ENCODE measurements at regions of chr2 and their contacts with region 1.

Region 1: DNA sequence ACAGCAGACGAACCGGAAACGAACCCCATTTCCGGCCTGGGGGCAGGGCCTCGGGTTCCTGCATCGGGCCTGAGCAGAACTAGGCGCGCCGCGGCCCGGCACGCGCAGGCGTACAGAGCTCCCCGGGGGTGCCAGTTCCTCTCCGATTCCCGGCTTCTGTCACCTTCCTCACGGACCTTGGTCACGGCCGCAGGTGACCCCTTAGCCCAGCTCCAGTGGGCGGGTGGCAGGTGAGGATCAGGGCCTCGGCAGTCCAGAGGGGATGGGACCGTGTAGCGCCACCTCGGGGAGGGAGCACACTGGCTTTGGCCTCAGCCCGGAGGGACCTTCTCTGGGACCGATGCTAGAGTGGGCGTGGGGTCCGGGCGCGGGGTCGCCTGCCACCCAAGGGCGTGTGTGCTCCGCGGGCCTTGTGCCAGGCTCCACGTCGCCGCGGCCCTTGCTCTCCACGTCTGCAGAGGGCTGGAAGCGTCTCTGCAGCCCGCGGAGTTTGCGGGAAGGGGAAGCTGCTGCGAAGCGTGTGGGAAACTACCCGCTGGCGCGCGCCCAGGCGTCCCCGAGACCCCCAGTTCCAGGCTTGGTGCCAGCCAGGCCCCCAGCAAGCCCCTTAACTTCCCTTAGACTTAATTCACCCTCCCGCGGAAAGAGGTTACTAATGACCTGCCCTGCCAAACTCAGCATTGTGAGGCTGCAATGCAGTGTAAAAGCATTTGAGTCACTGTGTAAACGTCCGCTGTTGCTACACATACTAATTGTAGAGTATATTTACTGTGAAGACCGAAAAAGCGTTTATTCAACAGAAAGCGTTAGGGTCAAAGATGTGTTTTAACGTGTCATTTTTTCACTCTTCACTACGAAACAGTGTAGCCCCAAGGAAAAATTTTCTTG is at the start of gene TRAPPC12:
- DNase-seq: peak; percentile 93
- H3K4me3 Mint-ChIP-seq: peak within 1 kb of the TSS; percentile 97
- H3K27ac Mint-ChIP-seq: peak within 1 kb of the TSS; percentile 94
- H3K4me1 Mint-ChIP-seq: peaks cover 49% of the 10 kb centered on the region
- H3K27me3 Mint-ChIP-seq: no peaks in the 10 kb centered on the region
- total RNA-seq, gene TRAPPC12: 44.3 to 45.8 TPM

Region 2: DNA sequence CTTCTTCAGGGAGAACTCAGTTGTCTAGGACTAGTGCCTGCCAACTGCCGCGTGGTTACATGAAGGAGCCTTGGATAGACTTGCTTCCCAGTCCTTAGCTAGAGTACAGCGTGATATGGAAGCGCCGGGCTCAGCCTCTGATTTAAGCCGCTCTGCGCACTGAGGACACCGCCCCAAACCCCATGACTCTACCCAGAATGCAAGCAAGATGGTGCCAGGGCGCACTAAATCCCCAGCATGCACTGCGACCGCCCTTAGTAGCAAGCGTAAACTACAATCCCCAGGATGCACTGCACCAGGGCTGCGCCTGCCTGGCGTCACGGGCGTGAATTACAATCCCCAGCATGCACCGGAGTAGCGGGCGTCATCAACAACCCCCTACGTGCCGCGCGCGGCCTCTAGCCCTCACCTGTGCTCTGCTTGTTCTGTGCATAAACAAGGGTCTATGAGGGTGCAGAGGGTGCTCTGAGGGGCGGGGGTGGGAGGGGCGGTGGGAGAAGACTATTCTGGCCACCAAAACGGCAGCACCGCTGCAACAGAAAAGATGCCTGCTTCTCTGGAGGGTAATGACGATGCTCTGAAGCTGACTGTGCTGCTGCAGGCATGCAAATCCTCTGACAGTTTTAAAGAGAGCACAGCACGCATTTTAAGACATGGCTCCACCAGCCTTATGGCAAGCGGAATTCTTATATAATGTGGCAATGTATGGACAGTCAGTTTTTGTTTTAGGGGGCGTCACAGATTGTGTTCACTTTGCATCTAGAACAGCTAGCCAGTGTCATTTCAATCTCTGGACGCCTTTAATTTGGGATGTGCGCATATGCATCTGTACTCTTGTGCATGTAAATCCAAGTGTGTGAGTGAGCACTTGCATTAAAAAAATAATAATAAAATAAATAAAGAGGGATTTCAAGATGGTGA is 766.4 kb before region 1 on chr2:
- CTCF ChIA-PET with region 1: no interaction called
- intact Hi-C with region 1: loop called (anchors 1 kb)
- DNase-seq: peak; percentile 96
- H3K4me3 Mint-ChIP-seq: peak overlapping the region; percentile 76
- H3K27ac Mint-ChIP-seq: peak overlapping the region; percentile 79
- H3K4me1 Mint-ChIP-seq: peaks cover 8% of the 10 kb centered on the region
- H3K27me3 Mint-ChIP-seq: no peaks in the 10 kb centered on the region

Region 3: GRCh38 chr2:3079959-3080948 is 299.6 kb before region 1 on chr2:
- CTCF ChIA-PET with region 1: no interaction called
- intact Hi-C with region 1: no loop called
- DNase-seq: no peak
- H3K4me3 Mint-ChIP-seq: no peak overlapping the region
- H3K27ac Mint-ChIP-seq: no peak overlapping the region
- H3K4me1 Mint-ChIP-seq: no peaks in the 10 kb centered on the region
- H3K27me3 Mint-ChIP-seq: peaks cover 28% of the 10 kb centered on the region

Region 4: GRCh38 chr2:3223080-3223923 is 156.6 kb before region 1 on chr2:
- CTCF ChIA-PET with region 1: no interaction called
- intact Hi-C with region 1: loop called (anchors 1 kb)
- DNase-seq: peak; percentile 97
- H3K4me3 Mint-ChIP-seq: peak overlapping the region; percentile 35
- H3K27ac Mint-ChIP-seq: peak overlapping the region; percentile 100
- H3K4me1 Mint-ChIP-seq: peaks cover 44% of the 10 kb centered on the region
- H3K27me3 Mint-ChIP-seq: no peaks in the 10 kb centered on the region

Region 5: GRCh38 chr2:3461801-3462492 is 82.1 kb after region 1 on chr2:
- CTCF ChIA-PET with region 1: no interaction called
- intact Hi-C with region 1: loop called (anchors 1 kb)
- DNase-seq: peak; percentile 66
- H3K4me3 Mint-ChIP-seq: no peak overlapping the region
- H3K27ac Mint-ChIP-seq: peak overlapping the region; percentile 79
- H3K4me1 Mint-ChIP-seq: peaks cover 13% of the 10 kb centered on the region
- H3K27me3 Mint-ChIP-seq: no peaks in the 10 kb centered on the region

Region 6: DNA sequence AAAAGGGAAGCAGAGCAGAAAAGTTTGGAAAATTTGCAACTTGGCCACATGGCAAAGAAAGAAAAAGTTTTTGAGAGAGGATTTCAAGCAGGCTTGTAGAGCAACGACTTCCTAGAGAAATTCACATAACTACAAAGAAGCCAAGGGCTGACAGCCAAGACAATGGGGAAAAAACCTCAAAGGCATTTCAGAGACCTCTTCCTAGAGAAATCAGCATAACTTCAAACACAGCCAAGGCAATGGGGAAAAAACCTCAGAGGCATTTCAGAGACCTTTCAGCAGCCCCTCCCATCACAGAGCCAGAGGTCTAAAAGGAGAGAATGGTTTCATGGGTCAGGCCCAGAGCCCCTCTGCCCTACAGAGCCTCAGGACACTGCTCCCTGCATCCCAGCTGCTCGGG is 132.2 kb after region 1 on chr2:
- CTCF ChIA-PET with region 1: no interaction called
- intact Hi-C with region 1: no loop called
- DNase-seq: peak; percentile 3
- H3K4me3 Mint-ChIP-seq: no peak overlapping the region
- H3K27ac Mint-ChIP-seq: no peak overlapping the region
- H3K4me1 Mint-ChIP-seq: peaks cover 11% of the 10 kb centered on the region
- H3K27me3 Mint-ChIP-seq: no peaks in the 10 kb centered on the region

Region 7: GRCh38 chr2:3558205-3559014 is 178.5 kb after region 1 on chr2 and contains the start of gene RNASEH1:
- CTCF ChIA-PET with region 1: interaction called, 4 read pairs
- intact Hi-C with region 1: loop called (anchors 1 kb)
- DNase-seq: peak; percentile 99
- H3K4me3 Mint-ChIP-seq: peak within 1 kb of the TSS; percentile 84
- H3K27ac Mint-ChIP-seq: peak within 1 kb of the TSS; percentile 90
- H3K4me1 Mint-ChIP-seq: peaks cover 36% of the 10 kb centered on the region
- H3K27me3 Mint-ChIP-seq: no peaks in the 10 kb centered on the region
- total RNA-seq, gene RNASEH1: 23.0 to 24.0 TPM